Left ventricle myocardium superior (tissue), 1 donor: ENCODE measurements at regions of chr1 and their contacts with region 1.

Region 1: GRCh38 chr1:222592171-222592570 is 2.4 kb upstream of the TAF1A start:
- DNase-seq: no peak
- ATAC-seq: no peak

Region 2: DNA sequence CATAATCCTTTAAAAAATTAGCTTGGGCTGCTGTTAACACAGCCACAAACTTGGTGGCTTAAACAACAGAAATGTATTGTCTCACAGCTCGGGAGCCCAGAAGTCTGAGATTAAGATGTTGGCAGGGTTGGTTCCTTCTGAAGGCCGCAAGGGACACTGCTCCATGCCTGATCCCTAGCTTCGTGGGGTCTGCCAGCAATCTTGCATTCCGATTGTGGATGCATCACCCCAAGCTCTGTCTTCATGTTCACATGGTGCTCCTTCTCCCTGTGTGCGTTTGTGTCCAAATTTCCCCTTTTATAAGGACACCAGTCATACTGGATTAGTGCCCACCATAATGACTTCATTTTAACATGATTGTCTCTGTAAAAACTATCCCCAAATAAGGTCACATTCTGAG is 39.3 kb before region 1 on chr1:
- intact Hi-C with region 1: loop called (anchors 2 kb)
- DNase-seq: no peak
- ATAC-seq: peak; percentile 27